ENCODE measurements at regions of chr10 and their contacts with region 1.

Region 1: GRCh38 chr10:77863446-77863845 is 63.1 kb downstream of the DLG5 start:
- DNase-seq: no peak
- H3K4me3 ChIP-seq: no peak overlapping the region
- H3K27ac ChIP-seq: no peak overlapping the region
- H3K4me1 ChIP-seq: no peaks in the 10 kb centered on the region
- H3K27me3 ChIP-seq: no peaks in the 10 kb centered on the region
- CTCF ChIP-seq: no peak

Region 2: GRCh38 chr10:78109210-78109609 is 245.8 kb after region 1 on chr10:
- CTCF ChIA-PET with region 1: no interaction called
- POLR2A ChIA-PET with region 1: no interaction called
- intact Hi-C with region 1: no loop called
- DNase-seq: no peak
- H3K4me3 ChIP-seq: no peak overlapping the region
- H3K27ac ChIP-seq: no peak overlapping the region
- H3K4me1 ChIP-seq: no peaks in the 10 kb centered on the region
- H3K27me3 ChIP-seq: no peaks in the 10 kb centered on the region
- CTCF ChIP-seq: no peak

Region 3: DNA sequence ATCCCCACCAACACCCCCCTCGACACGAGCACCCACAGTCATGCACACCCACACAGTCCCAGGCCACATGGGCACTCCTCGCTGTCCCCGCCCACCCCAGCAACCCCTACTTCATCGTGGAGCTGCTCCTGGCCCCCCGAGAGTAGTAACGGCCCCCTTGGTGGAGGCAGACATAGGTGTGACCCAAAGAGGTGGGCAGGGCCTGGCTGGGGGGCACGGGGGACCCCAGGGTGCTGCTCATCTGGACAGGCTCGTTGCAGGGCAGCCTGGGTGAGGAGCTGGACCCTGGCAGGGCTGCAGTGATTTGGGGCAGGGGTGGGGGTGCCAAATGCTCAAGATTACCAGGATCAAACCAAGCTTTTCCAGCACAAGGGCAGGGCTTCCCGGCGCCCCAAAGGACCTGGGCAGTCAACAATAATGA is 1162.9 kb after region 1 on chr10:
- CTCF ChIA-PET with region 1: no interaction called
- POLR2A ChIA-PET with region 1: interaction called, 12 read pairs
- intact Hi-C with region 1: no loop called
- DNase-seq: no peak
- H3K4me3 ChIP-seq: no peak overlapping the region
- H3K27ac ChIP-seq: no peak overlapping the region
- H3K4me1 ChIP-seq: no peaks in the 10 kb centered on the region
- H3K27me3 ChIP-seq: no peaks in the 10 kb centered on the region
- CTCF ChIP-seq: no peak